H1 (cell line): ENCODE measurements at regions of chr1 and their contacts with region 1.

Region 1: GRCh38 chr1:229848752-229849677 is 218.0 kb upstream of the GALNT2 start:
- DNase-seq: no peak
- H3K4me3 ChIP-seq: no peak overlapping the region
- H3K27ac ChIP-seq: no peak overlapping the region
- H3K4me1 ChIP-seq: no peaks in the 10 kb centered on the region
- H3K27me3 ChIP-seq: no peaks in the 10 kb centered on the region
- CTCF ChIP-seq: peak; percentile 44 to 83 (median 50)
- EP300 ChIP-seq: no peak
- POLR2A ChIP-seq: no peak
- RAD21 ChIP-seq: peak; percentile 51 to 62

Region 2: DNA sequence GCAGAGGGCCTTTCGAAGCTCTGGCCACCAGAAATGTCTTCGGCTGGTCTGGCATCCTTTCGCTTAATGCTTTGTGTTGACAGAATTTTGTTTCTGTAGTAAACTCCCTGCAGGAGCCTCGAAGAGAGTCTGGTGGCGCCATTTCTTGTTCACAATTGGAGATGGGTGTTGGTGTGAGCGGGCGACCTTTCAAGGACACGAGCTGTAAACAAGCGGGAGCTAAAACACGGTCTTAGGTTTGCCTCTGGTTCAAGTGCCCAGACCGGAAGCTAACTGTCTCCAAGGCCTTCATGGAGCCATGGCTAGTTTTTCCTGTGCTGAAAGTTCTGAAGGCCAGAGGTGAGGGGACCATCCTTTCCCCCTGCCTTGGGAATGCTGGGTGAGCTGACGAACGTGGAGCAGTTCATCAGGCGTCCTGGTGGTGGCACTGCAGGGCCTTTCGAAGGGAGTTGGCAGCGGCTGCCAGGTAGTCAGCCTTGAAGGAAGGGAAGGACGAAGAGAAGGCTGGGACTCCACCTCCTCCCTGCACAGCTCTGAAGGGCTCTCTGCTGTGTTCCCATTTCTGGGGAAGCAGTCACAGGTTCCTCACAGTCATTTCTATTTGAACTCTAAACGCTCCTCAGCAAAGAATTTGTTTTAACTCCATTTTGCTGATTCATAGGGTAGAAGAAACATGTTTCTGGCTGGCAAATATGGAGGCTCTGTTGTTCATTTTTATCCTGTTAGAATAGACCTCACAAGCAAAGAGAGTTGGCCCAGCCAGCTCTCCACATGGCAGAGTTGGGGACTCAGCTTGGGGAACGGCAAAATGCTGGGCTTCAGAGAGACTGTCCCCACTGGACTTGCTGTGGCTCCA is 187.8 kb before region 1 on chr1:
- CTCF ChIA-PET with region 1: interaction called, 24 read pairs
- POLR2A ChIA-PET with region 1: no interaction called
- DNase-seq: peak; percentile 65 to 96
- H3K4me3 ChIP-seq: no peak overlapping the region
- H3K27ac ChIP-seq: peak overlapping the region; percentile 31; the same call in 1 of the 2 replicates
- H3K4me1 ChIP-seq: peaks cover 0 to 4% (median 0%) of the 10 kb centered on the region in 4 experiments; a peak in 2 of 7 replicates
- H3K27me3 ChIP-seq: no peaks in the 10 kb centered on the region
- CTCF ChIP-seq: peak; percentile 92 to 100 (median 95)
- EP300 ChIP-seq: no peak
- POLR2A ChIP-seq: no peak
- RAD21 ChIP-seq: peak; percentile 96 to 98

Region 3: GRCh38 chr1:229836324-229836723 is 12.7 kb before region 1 on chr1:
- CTCF ChIA-PET with region 1: interaction called, 17 read pairs
- POLR2A ChIA-PET with region 1: no interaction called
- DNase-seq: no peak
- H3K4me3 ChIP-seq: no peak overlapping the region
- H3K27ac ChIP-seq: no peak overlapping the region
- H3K4me1 ChIP-seq: no peaks in the 10 kb centered on the region; a peak in 1 of 7 replicates
- H3K27me3 ChIP-seq: no peaks in the 10 kb centered on the region
- CTCF ChIP-seq: no peak
- EP300 ChIP-seq: no peak
- POLR2A ChIP-seq: no peak
- RAD21 ChIP-seq: no peak

Region 4: DNA sequence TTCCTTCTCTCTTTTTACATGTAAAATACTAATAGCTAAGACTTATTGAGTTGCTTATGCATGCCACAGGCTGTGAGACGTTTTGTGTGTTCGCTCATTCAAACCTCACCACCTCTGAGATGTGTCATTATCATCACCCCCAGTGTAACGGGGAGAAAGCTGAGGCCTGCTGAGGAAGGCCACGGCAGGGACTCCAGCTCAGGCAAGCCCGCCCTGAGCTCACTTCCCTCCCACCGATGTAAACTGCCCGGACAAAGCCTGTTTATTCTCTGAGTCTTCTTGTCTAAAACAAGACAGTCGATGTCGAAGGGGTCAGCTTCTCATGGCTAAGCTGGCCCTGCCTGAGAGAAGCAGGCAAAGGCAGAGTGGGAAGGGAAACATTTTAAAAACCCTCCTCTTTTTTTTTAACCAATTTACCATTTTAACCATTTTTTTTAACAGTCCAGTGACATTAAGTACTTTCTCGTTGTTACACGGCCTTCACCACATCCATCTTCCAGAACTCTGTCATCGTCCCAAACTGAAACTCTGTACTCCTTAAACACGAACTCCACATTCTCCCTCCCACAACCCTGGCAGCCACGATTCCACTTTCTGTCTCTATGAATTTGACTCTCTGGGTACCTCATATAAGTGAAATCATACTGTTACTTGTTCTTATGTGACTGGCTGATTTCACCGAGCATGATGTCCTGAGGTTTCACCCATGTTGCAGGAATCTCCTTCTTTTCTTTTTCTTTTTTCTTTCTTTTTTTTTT is 13.2 kb after region 1 on chr1:
- CTCF ChIA-PET with region 1: interaction called, 18 read pairs
- POLR2A ChIA-PET with region 1: no interaction called
- DNase-seq: peak in 1 of 2 experiments; percentile 15
- H3K4me3 ChIP-seq: no peak overlapping the region
- H3K27ac ChIP-seq: no peak overlapping the region
- H3K4me1 ChIP-seq: peaks cover 2 to 9% (median 5%) of the 10 kb centered on the region in 4 experiments; a peak in 6 of 7 replicates
- H3K27me3 ChIP-seq: no peaks in the 10 kb centered on the region; a peak in 1 of 7 replicates
- CTCF ChIP-seq: no peak
- EP300 ChIP-seq: no peak
- POLR2A ChIP-seq: no peak
- RAD21 ChIP-seq: no peak

Region 5: DNA sequence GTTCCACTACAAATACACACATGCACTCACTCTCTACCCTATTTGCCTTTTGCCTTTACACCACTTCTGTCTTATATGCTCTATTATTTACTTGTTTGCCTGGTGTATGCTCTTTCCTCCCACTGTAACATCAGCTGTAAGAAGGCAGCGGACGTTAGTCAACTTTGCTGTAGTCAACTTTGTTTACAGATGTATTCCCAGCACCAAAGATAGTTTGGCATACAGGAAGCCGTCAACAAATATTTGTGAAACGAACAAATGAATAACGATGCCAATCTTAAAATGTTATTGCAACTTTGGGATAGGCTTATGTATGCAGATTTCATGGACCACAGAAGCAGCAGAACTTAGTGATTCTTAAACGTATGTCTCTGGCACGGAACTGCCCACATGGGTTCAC is 79.8 kb after region 1 on chr1:
- CTCF ChIA-PET with region 1: no interaction called
- POLR2A ChIA-PET with region 1: no interaction called
- DNase-seq: no peak
- H3K4me3 ChIP-seq: no peak overlapping the region
- H3K27ac ChIP-seq: no peak overlapping the region
- H3K4me1 ChIP-seq: peaks cover 0 to 2% (median 0%) of the 10 kb centered on the region in 4 experiments; a peak in 2 of 7 replicates
- H3K27me3 ChIP-seq: no peaks in the 10 kb centered on the region
- CTCF ChIP-seq: no peak
- EP300 ChIP-seq: no peak
- POLR2A ChIP-seq: no peak
- RAD21 ChIP-seq: no peak

Region 6: DNA sequence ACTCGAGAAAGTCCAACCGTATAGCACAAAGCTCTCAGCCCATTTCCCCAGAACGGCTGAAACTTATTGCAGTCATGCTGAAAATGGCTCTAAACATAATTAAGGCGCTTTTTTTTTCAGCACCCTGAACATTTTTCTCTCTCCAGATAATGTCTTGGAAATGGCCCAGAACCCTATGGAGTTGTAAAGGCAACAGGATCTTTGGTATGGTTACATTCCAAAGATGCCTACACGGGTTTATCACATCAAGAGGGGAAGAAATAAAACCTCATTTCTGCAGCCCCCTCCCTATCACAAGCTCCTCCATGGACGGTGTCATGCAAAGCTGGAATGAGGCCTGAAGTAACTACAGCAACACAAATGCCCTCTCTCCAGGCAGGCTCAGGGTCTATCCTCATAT is 91.7 kb after region 1 on chr1:
- CTCF ChIA-PET with region 1: no interaction called
- POLR2A ChIA-PET with region 1: no interaction called
- DNase-seq: no peak
- H3K4me3 ChIP-seq: no peak overlapping the region
- H3K27ac ChIP-seq: no peak overlapping the region
- H3K4me1 ChIP-seq: no peaks in the 10 kb centered on the region
- H3K27me3 ChIP-seq: no peaks in the 10 kb centered on the region; a peak in 1 of 7 replicates
- CTCF ChIP-seq: no peak
- EP300 ChIP-seq: no peak
- POLR2A ChIP-seq: no peak
- RAD21 ChIP-seq: no peak